Activated CD4-positive, alpha-beta T cell treated with anti-CD3 and anti-CD28 coated beads for 36 hours (primary cell): ENCODE measurements at regions of chr6 and their contacts with region 1.

Region 1: GRCh38 chr6:157764178-157765033 is 58.6 kb upstream of the SNX9 start:
- DNase-seq: peak; percentile 93
- ATAC-seq: peak; percentile 69
- H3K4me3 Mint-ChIP-seq: peak overlapping the region; percentile 41
- H3K27ac Mint-ChIP-seq: peak overlapping the region; percentile 91
- H3K4me1 Mint-ChIP-seq: peaks cover 87% of the 10 kb centered on the region
- H3K27me3 Mint-ChIP-seq: peaks cover 2% of the 10 kb centered on the region

Region 2: GRCh38 chr6:157461000-157461915 is 303.1 kb before region 1 on chr6:
- CTCF ChIA-PET with region 1: interaction called, 5 read pairs
- POLR2A ChIA-PET with region 1: no interaction called
- intact Hi-C with region 1: loop called in 1 of 2 experiments (anchors 5 kb)
- DNase-seq: peak; percentile 90
- ATAC-seq: peak; percentile 77
- H3K4me3 Mint-ChIP-seq: no peak overlapping the region
- H3K27ac Mint-ChIP-seq: peak overlapping the region; percentile 89
- H3K4me1 Mint-ChIP-seq: peaks cover 56% of the 10 kb centered on the region
- H3K27me3 Mint-ChIP-seq: no peaks in the 10 kb centered on the region

Region 3: GRCh38 chr6:157789861-157790260 is 25.5 kb after region 1 on chr6:
- CTCF ChIA-PET with region 1: no interaction called
- POLR2A ChIA-PET with region 1: no interaction called
- intact Hi-C with region 1: no loop called
- DNase-seq: no peak
- ATAC-seq: no peak
- H3K4me3 Mint-ChIP-seq: no peak overlapping the region
- H3K27ac Mint-ChIP-seq: no peak overlapping the region
- H3K4me1 Mint-ChIP-seq: peaks cover 15% of the 10 kb centered on the region
- H3K27me3 Mint-ChIP-seq: peaks cover 3% of the 10 kb centered on the region

Region 4: GRCh38 chr6:157800420-157801237 is 36.2 kb after region 1 on chr6:
- CTCF ChIA-PET with region 1: interaction called, 4 read pairs
- POLR2A ChIA-PET with region 1: interaction called, 6 read pairs
- intact Hi-C with region 1: loop called (anchors 1 kb)
- DNase-seq: peak; percentile 70
- ATAC-seq: peak; percentile 89
- H3K4me3 Mint-ChIP-seq: peak overlapping the region; percentile 41
- H3K27ac Mint-ChIP-seq: peak overlapping the region; percentile 72
- H3K4me1 Mint-ChIP-seq: peaks cover 62% of the 10 kb centered on the region
- H3K27me3 Mint-ChIP-seq: peaks cover 5% of the 10 kb centered on the region

Region 5: DNA sequence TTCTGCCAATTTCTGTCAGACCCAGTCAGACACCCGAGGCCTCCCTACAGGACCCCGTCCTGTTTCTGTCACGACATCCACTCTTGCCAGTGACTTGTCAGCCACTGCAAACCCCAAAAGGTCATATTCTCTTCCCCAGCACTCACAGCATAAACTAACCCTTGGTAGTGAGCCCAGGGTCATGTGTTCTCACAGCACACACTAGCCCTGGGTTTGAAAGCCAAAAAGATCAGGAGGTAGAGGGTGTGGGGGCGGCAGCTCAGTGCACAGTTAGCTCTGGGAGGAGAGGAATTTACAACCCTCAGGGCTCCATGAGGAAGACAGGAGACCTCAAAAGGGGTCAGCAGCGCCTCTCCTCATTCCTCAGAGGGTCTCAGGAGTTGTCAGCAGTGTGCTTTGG is 48.8 kb after region 1 on chr6:
- CTCF ChIA-PET with region 1: no interaction called
- POLR2A ChIA-PET with region 1: no interaction called
- intact Hi-C with region 1: no loop called
- DNase-seq: no peak
- ATAC-seq: no peak
- H3K4me3 Mint-ChIP-seq: no peak overlapping the region
- H3K27ac Mint-ChIP-seq: no peak overlapping the region
- H3K4me1 Mint-ChIP-seq: peaks cover 50% of the 10 kb centered on the region
- H3K27me3 Mint-ChIP-seq: peaks cover under 1% of the 10 kb centered on the region

Region 6: DNA sequence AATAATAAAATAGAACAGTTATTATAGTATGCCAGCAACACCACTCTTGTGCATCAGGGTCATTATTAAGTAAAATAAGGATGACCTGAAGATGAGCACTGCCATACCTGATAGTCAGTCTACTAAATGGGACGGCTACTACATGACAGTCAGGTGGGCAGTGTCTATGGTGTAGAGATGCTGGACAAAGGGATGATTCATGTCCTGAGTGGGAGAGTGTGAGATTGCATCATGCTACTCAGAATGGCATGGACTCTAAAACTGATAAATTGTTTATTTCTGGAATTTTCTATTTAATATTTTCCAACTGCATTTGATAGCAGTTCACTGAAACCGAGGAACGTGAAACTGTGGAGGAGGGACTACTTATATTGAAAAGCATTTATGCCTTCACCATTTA is 97.4 kb after region 1 on chr6:
- CTCF ChIA-PET with region 1: interaction called, 3 read pairs
- POLR2A ChIA-PET with region 1: interaction called, 3 read pairs
- intact Hi-C with region 1: loop called (anchors 1 to 5 kb)
- DNase-seq: no peak
- ATAC-seq: no peak
- H3K4me3 Mint-ChIP-seq: no peak overlapping the region
- H3K27ac Mint-ChIP-seq: no peak overlapping the region
- H3K4me1 Mint-ChIP-seq: peaks cover 74% of the 10 kb centered on the region
- H3K27me3 Mint-ChIP-seq: no peaks in the 10 kb centered on the region

Region 7: GRCh38 chr6:157962601-157963302 is 198.3 kb after region 1 on chr6:
- CTCF ChIA-PET with region 1: no interaction called
- POLR2A ChIA-PET with region 1: no interaction called
- intact Hi-C with region 1: loop called in 1 of 2 experiments (anchors 5 kb)
- DNase-seq: peak; percentile 54
- ATAC-seq: peak; percentile 86
- H3K4me3 Mint-ChIP-seq: peak overlapping the region; percentile 43
- H3K27ac Mint-ChIP-seq: peak overlapping the region; percentile 92
- H3K4me1 Mint-ChIP-seq: peaks cover 28% of the 10 kb centered on the region
- H3K27me3 Mint-ChIP-seq: peaks cover 1% of the 10 kb centered on the region

Region 8: GRCh38 chr6:158853072-158853871 is 1088.9 kb after region 1 on chr6:
- CTCF ChIA-PET with region 1: no interaction called
- POLR2A ChIA-PET with region 1: no interaction called
- intact Hi-C with region 1: loop called in 1 of 2 experiments (anchors 10 kb)
- DNase-seq: peak; percentile 94
- ATAC-seq: peak; percentile 83
- H3K4me3 Mint-ChIP-seq: no peak overlapping the region
- H3K27ac Mint-ChIP-seq: no peak overlapping the region
- H3K4me1 Mint-ChIP-seq: peaks cover 29% of the 10 kb centered on the region
- H3K27me3 Mint-ChIP-seq: no peaks in the 10 kb centered on the region